ENCODE measurements at regions of chr13 and their contacts with region 1.

Region 1: DNA sequence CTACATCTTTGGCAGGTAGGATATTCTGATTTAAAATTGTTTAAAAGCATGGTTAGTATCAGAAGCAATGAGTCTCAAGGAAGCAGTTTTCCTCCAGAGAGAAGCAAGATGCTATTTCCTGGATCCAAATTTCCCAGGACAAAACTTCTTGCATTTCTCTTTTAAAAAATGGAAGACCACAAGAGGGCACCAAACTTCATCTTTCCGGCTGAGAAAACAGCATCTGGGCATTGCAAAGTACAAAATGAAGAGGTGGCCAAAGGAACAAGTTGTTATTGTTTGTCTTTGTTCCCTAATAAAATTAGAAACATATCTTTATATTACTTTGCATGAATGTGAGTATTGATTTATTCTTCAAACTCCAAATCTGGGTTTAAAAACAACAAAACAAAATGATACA is 60.0 kb upstream of the LRCH1 start:
- DNase-seq: peak; percentile 27
- H3K4me3 Mint-ChIP-seq: no peak overlapping the region
- H3K27ac Mint-ChIP-seq: no peak overlapping the region
- H3K4me1 Mint-ChIP-seq: no peaks in the 10 kb centered on the region
- H3K27me3 Mint-ChIP-seq: peaks cover 26% of the 10 kb centered on the region
- CTCF ChIP-seq: peak; percentile 11

Region 2: DNA sequence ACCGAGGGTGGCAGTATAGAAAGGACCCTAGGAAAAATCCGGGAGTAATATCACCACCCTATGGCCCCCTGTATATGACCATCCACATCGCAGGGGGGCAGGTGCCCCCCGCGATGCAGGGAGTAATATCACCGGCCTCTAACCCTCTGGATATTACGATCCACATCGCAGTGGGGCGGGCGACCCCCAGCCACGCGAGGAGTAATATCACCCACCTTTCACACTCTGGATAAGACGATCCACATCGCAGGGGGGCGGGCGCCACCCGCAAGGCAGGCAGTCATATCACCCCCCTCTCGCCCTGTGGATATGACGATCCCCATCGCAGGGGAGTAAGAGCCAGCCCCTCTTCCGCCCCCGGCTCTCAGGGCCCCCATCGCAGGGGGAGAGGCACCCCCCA is 29.2 kb before region 1 on chr13:
- CTCF ChIA-PET with region 1: no interaction called
- intact Hi-C with region 1: no loop called
- DNase-seq: no peak
- H3K4me3 Mint-ChIP-seq: no peak overlapping the region
- H3K27ac Mint-ChIP-seq: no peak overlapping the region
- H3K4me1 Mint-ChIP-seq: no peaks in the 10 kb centered on the region
- H3K27me3 Mint-ChIP-seq: no peaks in the 10 kb centered on the region
- CTCF ChIP-seq: no peak

Region 3: DNA sequence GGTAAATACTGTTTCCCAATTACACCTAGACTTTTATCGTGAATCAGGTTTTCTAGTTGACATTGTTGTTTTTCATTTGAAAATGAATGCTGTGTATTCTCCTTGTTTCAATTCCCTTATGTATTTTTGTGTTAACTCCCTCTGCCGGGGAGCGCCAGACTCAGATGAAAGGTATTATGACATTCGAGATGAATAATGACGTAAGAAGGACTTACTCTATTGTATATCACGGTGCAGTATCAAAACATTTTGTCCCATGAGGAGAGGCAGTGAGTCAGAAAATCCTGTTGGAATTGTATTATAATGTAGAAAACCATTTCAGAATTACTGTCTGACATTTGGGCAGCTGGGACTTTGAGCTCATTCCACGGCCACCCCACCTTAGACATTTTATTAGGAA is 121.6 kb after region 1 on chr13:
- CTCF ChIA-PET with region 1: no interaction called
- intact Hi-C with region 1: no loop called
- DNase-seq: no peak
- H3K4me3 Mint-ChIP-seq: no peak overlapping the region
- H3K27ac Mint-ChIP-seq: no peak overlapping the region
- H3K4me1 Mint-ChIP-seq: peaks cover 36% of the 10 kb centered on the region
- H3K27me3 Mint-ChIP-seq: no peaks in the 10 kb centered on the region
- CTCF ChIP-seq: no peak

Region 4: DNA sequence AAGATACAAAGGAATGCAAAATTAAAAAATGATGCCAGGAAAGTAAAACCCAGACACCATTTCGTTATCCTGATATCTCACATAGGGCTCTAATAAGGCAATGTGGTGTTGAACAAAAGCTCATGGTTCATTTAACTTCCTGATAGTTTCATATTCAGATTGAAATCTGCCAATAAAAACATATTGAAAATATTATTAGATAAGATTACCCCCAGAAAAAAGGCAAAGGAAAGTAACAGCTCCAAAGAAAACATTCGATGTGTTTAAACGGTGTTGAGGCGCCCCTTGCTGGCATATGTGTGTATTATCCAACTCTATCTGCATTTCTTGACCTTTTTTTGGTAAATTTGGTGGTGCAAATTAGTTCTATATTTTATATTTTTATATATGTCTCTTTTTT is 228.1 kb after region 1 on chr13:
- CTCF ChIA-PET with region 1: interaction called, 4 read pairs
- intact Hi-C with region 1: loop called (anchors 1 kb)
- DNase-seq: peak; percentile 14
- H3K4me3 Mint-ChIP-seq: no peak overlapping the region
- H3K27ac Mint-ChIP-seq: no peak overlapping the region
- H3K4me1 Mint-ChIP-seq: no peaks in the 10 kb centered on the region
- H3K27me3 Mint-ChIP-seq: no peaks in the 10 kb centered on the region
- CTCF ChIP-seq: peak; percentile 47

Region 5: GRCh38 chr13:46934749-46935148 is 441.8 kb after region 1 on chr13:
- CTCF ChIA-PET with region 1: no interaction called
- intact Hi-C with region 1: no loop called
- DNase-seq: no peak
- H3K4me3 Mint-ChIP-seq: no peak overlapping the region
- H3K27ac Mint-ChIP-seq: no peak overlapping the region
- H3K4me1 Mint-ChIP-seq: no peaks in the 10 kb centered on the region
- H3K27me3 Mint-ChIP-seq: no peaks in the 10 kb centered on the region
- CTCF ChIP-seq: no peak

Measured in Calu3 (cell line).